ENCODE measurements at regions of chr17 and their contacts with region 1.

Region 1: DNA sequence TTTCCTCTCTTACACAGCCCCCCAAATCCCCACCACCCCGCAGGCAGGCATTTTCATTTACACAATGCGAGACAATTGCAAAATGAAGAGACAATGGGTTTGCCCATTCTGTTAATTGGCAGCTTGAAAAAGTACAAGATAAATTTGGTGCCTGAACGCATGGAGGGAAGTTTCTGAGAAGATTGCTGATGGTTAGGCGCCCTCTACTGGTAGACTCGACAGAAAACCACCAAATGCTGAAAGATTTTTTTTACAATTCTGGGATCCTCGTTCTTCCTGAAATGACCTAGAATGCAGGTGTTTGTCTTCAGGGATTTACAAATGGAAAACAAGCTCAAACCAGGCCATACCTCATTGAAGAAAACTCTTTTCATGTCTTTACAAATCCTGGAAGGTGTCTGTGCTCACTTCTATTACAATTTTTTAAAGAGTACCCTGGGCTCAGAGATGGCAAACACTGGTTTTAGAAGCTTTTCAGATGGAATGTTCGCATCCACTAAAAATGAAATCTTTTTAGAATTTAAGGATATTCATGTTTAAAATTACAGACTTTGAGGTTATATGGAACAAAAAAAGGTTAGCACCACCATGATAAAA is 338.5 kb downstream of the PMP22 start:
- DNase-seq: peak; percentile 63
- ATAC-seq: no peak
- H3K4me3 Mint-ChIP-seq: no peak overlapping the region
- H3K27ac Mint-ChIP-seq: no peak overlapping the region
- H3K4me1 Mint-ChIP-seq: no peaks in the 10 kb centered on the region
- H3K27me3 Mint-ChIP-seq: peaks cover 10% of the 10 kb centered on the region
- CTCF ChIP-seq: peak; percentile 86

Region 2: DNA sequence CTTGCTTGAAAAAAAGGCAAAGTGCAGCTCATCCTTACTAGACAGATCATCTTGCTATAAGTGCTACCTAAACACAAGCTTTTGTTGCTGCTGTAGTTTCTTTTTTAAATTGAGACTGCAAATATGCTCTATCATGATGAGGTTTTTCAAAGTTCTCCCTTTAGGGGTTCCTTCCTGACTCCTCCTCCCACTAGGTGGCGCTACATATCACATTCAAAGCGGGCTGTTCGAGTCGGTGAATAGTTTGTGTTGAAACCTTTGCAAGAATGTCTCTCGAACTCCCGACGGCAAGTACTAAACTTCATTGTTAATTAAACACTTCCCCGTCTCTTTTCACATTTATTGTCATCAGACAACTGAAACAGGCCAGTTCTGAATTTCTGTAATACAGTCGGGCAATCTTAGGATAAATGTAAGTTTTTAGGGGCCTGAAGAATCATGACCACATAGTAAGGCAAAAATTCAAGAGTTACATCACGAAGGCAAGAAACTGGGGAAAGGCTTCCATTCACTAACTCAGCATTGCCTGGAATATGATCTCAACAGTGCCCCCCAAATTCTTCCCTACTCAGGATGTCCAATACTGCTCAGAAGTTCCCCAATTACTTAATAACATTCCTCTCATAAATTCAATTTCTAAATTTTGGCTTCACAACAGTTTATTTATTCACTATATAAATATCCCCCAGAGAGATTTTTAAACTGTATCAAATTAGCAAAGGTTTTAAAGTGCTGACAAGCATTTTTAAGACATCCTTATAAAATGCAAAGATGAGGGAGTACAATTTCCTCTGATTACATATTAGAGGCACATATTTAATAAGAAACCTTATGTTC is 1331.6 kb before region 1 on chr17:
- CTCF ChIA-PET with region 1: interaction called, 9 read pairs
- POLR2A ChIA-PET with region 1: no interaction called
- intact Hi-C with region 1: loop called (anchors 5 kb)
- DNase-seq: peak; percentile 86
- ATAC-seq: peak; percentile 69
- H3K4me3 Mint-ChIP-seq: no peak overlapping the region
- H3K27ac Mint-ChIP-seq: no peak overlapping the region
- H3K4me1 Mint-ChIP-seq: peaks cover 5% of the 10 kb centered on the region
- H3K27me3 Mint-ChIP-seq: peaks cover 20% of the 10 kb centered on the region
- CTCF ChIP-seq: peak; percentile 79

Region 3: DNA sequence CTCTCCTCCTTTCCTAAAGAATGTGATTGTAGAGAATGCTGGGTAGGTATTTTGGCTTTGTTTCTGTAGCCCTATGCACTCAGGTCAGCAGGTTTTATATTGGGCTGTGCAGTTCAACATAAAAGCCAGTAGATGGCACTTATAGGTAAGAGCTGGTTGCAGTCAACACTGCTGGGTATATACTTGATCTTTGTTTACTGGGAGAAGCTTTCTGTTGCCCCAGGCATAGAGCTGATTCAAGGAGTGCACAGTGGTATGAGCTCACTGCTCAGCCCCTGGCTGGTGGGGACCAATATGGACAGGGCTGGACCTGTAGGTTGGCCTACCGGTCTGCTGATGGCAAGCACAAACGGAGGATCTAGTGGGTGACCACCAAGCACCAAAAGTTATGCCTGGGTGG is 40.4 kb before region 1 on chr17:
- CTCF ChIA-PET with region 1: interaction called, 11 read pairs
- POLR2A ChIA-PET with region 1: no interaction called
- intact Hi-C with region 1: no loop called
- DNase-seq: no peak
- ATAC-seq: no peak
- H3K4me3 Mint-ChIP-seq: no peak overlapping the region
- H3K27ac Mint-ChIP-seq: no peak overlapping the region
- H3K4me1 Mint-ChIP-seq: no peaks in the 10 kb centered on the region
- H3K27me3 Mint-ChIP-seq: peaks cover 21% of the 10 kb centered on the region
- CTCF ChIP-seq: peak; percentile 38

Region 4: DNA sequence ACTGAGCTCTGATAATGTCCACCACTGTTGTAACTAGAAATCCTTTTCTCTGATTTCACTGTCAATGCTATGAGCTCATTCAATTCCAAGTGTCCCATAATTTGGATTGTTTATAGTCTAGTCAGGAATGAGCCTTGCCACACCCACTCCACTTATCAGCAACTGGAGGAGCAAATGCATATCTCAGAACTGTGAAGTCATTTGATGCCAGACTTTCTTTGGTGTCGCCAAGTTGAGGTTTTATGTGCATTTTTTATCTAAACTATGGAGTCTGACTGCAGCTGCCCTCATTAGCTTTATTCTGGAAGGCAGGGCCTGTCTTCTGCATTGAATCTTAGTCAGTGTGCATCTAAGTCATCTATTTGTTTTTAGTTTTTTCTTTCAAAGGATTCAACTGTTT is 22.8 kb before region 1 on chr17:
- CTCF ChIA-PET with region 1: interaction called, 10 read pairs
- POLR2A ChIA-PET with region 1: no interaction called
- intact Hi-C with region 1: no loop called
- DNase-seq: no peak
- ATAC-seq: no peak
- H3K4me3 Mint-ChIP-seq: no peak overlapping the region
- H3K27ac Mint-ChIP-seq: no peak overlapping the region
- H3K4me1 Mint-ChIP-seq: no peaks in the 10 kb centered on the region
- H3K27me3 Mint-ChIP-seq: peaks cover 10% of the 10 kb centered on the region
- CTCF ChIP-seq: no peak

Region 5: DNA sequence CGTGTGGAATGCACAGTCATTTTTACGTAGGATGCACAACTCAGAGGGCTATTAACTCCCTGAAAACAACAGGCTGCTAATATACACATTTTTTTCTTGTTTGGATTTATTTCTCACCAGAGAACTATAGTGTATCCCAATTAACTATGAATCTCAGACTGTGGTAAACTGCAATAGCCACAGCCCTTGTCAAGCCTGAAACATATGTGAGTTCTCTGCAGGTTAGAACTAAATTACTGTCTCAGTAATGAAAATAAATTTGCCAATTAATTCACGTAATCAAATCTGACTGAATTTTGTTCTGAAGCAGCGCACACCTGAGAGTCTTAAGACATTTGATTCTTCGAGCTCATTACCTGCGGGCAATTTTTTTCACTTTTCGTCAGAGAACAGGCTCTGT is 19.9 kb after region 1 on chr17:
- CTCF ChIA-PET with region 1: interaction called, 18 read pairs
- POLR2A ChIA-PET with region 1: no interaction called
- intact Hi-C with region 1: no loop called
- DNase-seq: no peak
- ATAC-seq: no peak
- H3K4me3 Mint-ChIP-seq: no peak overlapping the region
- H3K27ac Mint-ChIP-seq: no peak overlapping the region
- H3K4me1 Mint-ChIP-seq: no peaks in the 10 kb centered on the region
- H3K27me3 Mint-ChIP-seq: peaks cover 7% of the 10 kb centered on the region
- CTCF ChIP-seq: no peak

Region 6: GRCh38 chr17:15012351-15012980 is 85.8 kb after region 1 on chr17:
- CTCF ChIA-PET with region 1: no interaction called
- POLR2A ChIA-PET with region 1: no interaction called
- intact Hi-C with region 1: no loop called
- DNase-seq: no peak
- ATAC-seq: no peak
- H3K4me3 Mint-ChIP-seq: no peak overlapping the region
- H3K27ac Mint-ChIP-seq: no peak overlapping the region
- H3K4me1 Mint-ChIP-seq: no peaks in the 10 kb centered on the region
- H3K27me3 Mint-ChIP-seq: peaks cover 11% of the 10 kb centered on the region
- CTCF ChIP-seq: no peak

Measured in activated CD8-positive, alpha-beta T cell treated with anti-CD3 and anti-CD28 coated beads for 36 hours (primary cell).